ENCODE measurements at regions of chr4 and their contacts with region 1.

Region 1: DNA sequence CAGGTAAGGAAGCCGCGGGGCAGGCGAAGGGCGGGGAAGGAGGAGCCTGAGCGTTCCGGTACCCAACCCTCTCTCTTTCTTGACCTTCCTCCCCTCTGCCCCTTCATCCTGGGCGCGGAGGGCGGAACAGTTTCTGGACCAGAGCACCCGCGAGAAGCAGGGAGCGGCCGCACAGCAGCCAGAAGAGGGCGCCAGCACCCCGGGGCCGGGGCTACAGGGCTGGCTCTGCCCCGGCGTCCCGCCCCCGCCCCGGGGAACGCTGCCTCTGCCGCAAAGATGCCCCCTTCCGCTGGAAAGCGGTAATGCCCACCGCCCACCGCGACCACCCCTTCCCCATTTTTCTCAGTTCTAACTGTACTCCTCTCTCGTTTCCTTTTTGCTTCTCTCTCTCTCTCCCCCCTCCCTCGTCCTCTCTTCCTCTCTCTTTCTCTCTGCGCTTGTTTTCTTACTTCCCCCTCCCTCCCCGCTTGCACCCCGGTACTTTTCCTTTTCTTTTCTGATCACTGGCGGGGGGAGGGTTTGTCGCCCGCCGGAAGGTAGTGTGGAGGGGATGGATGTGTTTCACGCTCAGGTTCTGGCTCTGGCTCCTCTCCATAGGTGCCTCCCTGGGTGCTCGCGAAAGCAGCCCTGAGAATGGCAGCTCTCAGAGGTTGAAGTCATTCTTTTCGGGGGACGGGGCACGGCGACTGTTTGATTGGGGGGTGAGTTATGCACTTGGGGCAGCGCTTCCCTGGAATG is 13.1 kb upstream of the PRDM8 start:
- DNase-seq: peak; percentile 94
- ATAC-seq: peak; percentile 79
- H3K4me3 ChIP-seq: peak overlapping the region; percentile 64 to 99 (median 91)
- H3K4me3 Mint-ChIP-seq: peak overlapping the region; percentile 99
- H3K27ac ChIP-seq: peak overlapping the region; percentile 80 to 82
- H3K27ac Mint-ChIP-seq: peak overlapping the region; percentile 98
- H3K4me1 ChIP-seq: peaks cover 39 to 42% of the 10 kb centered on the region in 2 donors
- H3K4me1 Mint-ChIP-seq: peaks cover 56% of the 10 kb centered on the region
- H3K27me3 ChIP-seq: peaks cover 0 to 26% (median 0%) of the 10 kb centered on the region in 4 experiments
- H3K27me3 Mint-ChIP-seq: peaks cover 3% of the 10 kb centered on the region
- CTCF ChIP-seq: peak; percentile 100

Region 2: DNA sequence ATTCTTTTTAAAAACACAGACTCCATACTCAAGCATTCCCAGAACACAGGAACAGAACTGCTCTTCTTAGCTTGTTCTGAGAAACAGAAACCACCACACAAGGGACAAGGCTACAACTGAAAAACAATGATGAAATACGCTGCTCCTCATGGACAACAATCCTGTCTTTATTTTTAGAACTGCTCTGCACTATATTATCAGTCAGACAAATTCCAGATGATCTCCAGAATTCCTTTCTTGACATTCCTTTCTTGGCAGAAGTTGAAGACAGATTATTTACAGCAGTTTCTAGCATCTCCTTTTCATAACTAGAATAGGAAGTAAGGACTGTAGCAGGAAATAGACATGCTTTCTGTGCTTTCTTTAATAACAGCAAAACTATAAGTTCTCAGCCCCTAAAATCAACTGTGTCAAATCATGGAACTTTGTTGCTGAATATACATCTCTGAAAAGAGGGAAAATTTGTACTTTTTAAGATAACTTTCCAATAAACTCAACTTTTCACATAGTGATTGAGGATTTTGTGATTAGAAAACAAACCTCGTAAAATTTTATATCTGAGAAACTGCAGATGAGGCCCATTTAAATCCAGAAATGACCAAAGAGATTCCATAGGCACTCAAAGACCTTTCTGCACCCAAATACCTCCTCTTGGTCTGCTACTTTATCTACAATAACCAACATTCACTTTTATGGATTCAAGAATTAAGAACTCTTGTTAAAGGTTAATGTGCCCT is 147.1 kb before region 1 on chr4:
- CTCF ChIA-PET with region 1: no interaction called
- POLR2A ChIA-PET with region 1: no interaction called
- intact Hi-C with region 1: no loop called
- DNase-seq: no peak
- ATAC-seq: no peak
- H3K4me3 ChIP-seq: no peak overlapping the region
- H3K4me3 Mint-ChIP-seq: peak overlapping the region; percentile 14
- H3K27ac ChIP-seq: peak overlapping the region in 1 of 2 donors; percentile 54
- H3K27ac Mint-ChIP-seq: peak overlapping the region; percentile 37
- H3K4me1 ChIP-seq: peaks cover 0 to 16% of the 10 kb centered on the region in 2 donors
- H3K4me1 Mint-ChIP-seq: peaks cover 22% of the 10 kb centered on the region
- H3K27me3 ChIP-seq: no peaks in the 10 kb centered on the region
- H3K27me3 Mint-ChIP-seq: no peaks in the 10 kb centered on the region
- CTCF ChIP-seq: no peak

Region 3: DNA sequence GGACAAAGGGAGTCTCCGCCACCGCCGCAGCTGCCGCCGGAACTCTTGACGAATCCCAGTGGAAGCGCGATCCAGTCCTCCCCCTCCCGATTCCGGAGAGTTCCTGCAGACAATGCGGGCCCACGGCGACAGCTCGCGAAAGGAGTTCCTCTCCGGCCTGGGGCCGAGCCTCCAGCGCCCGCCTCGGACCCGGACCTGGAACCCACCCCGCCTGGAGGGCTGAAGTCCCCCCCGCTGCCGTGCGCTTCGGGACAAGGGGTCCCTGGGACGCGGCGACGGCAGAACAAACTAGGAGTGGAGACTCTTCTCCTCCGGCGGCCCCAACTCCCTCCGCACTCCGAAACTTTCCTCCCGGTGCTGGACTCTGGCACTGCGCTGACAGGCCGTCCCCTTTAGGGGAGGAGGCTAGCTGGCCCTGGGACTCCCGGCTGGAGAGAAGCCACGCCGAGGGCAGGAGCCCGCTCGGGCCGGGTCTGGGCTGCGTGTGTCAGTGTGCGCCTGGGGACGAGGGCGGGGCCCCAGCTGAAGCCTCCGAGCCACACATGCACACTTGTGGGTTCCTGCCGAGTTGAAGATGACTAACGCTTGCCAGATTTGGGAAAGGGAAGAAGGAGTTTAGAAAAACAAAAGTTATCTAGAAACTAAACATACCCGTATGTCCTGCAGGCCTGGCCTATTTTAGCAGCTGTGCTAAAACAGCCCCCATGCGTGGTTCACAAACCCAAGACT is 111.3 kb before region 1 on chr4 and contains the start of gene ANTXR2:
- CTCF ChIA-PET with region 1: interaction called, 50 read pairs
- POLR2A ChIA-PET with region 1: interaction called, 20 read pairs
- intact Hi-C with region 1: loop called (anchors 1 kb)
- DNase-seq: peak; percentile 88
- ATAC-seq: peak; percentile 73
- H3K4me3 ChIP-seq: peak within 1 kb of the TSS; percentile 87 to 96 (median 88)
- H3K4me3 Mint-ChIP-seq: peak within 1 kb of the TSS; percentile 99
- H3K27ac ChIP-seq: peak within 1 kb of the TSS; percentile 91 to 97
- H3K27ac Mint-ChIP-seq: peak within 1 kb of the TSS; percentile 99
- H3K4me1 ChIP-seq: peaks cover 27% of the 10 kb centered on the region in 2 donors
- H3K4me1 Mint-ChIP-seq: peaks cover 52% of the 10 kb centered on the region
- H3K27me3 ChIP-seq: no peaks in the 10 kb centered on the region
- H3K27me3 Mint-ChIP-seq: no peaks in the 10 kb centered on the region
- CTCF ChIP-seq: no peak
- total RNA-seq, gene ANTXR2: 63.0 and 68.8 TPM in 2 replicates

Region 4: GRCh38 chr4:80173401-80173800 is 10.8 kb before region 1 on chr4:
- CTCF ChIA-PET with region 1: interaction called, 96 read pairs
- POLR2A ChIA-PET with region 1: interaction called, 32 read pairs
- intact Hi-C with region 1: loop called (anchors 1 kb)
- DNase-seq: peak; percentile 82
- ATAC-seq: peak; percentile 93
- H3K4me3 ChIP-seq: peak overlapping the region in 1 of 5 experiments; percentile 47
- H3K4me3 Mint-ChIP-seq: peak overlapping the region; percentile 87
- H3K27ac ChIP-seq: peak overlapping the region; percentile 80 to 84
- H3K27ac Mint-ChIP-seq: peak overlapping the region; percentile 98
- H3K4me1 ChIP-seq: peaks cover 41 to 42% of the 10 kb centered on the region in 2 donors
- H3K4me1 Mint-ChIP-seq: peaks cover 60% of the 10 kb centered on the region
- H3K27me3 ChIP-seq: no peaks in the 10 kb centered on the region
- H3K27me3 Mint-ChIP-seq: no peaks in the 10 kb centered on the region
- CTCF ChIP-seq: no peak

Region 5: GRCh38 chr4:80202190-80202711 is 18.0 kb after region 1 on chr4:
- CTCF ChIA-PET with region 1: interaction called, 195 read pairs
- POLR2A ChIA-PET with region 1: interaction called, 19 read pairs
- intact Hi-C with region 1: loop called (anchors 1 kb)
- DNase-seq: peak; percentile 90
- ATAC-seq: peak; percentile 60
- H3K4me3 ChIP-seq: peak overlapping the region; percentile 41 to 82 (median 77)
- H3K4me3 Mint-ChIP-seq: peak overlapping the region; percentile 89
- H3K27ac ChIP-seq: peak overlapping the region; percentile 53 to 82
- H3K27ac Mint-ChIP-seq: peak overlapping the region; percentile 91
- H3K4me1 ChIP-seq: peaks cover 17 to 24% of the 10 kb centered on the region in 2 donors
- H3K4me1 Mint-ChIP-seq: peaks cover 24% of the 10 kb centered on the region
- H3K27me3 ChIP-seq: peaks cover 0 to 21% (median under 1%) of the 10 kb centered on the region in 4 experiments
- H3K27me3 Mint-ChIP-seq: peaks cover 8% of the 10 kb centered on the region
- CTCF ChIP-seq: peak; percentile 86

Region 6: DNA sequence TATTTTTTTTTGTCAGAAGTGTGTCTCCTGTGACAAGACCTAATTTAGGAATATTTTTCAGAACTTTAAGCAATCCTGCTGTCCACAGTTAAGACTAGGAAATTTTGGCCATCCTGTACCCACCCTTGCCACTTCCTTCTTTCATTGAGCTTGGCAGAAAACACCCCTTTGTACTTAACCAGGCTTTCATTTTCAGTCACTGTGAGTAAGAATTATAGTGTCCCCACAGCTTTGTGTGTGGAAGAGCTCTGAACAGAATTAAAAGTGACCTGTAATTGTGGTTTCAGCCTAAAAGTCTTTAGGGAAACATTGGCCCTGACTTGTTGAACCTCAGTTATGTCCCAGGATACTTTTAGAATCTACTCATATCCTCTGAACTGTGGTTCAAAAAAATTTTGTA is 692.6 kb after region 1 on chr4:
- CTCF ChIA-PET with region 1: no interaction called
- POLR2A ChIA-PET with region 1: no interaction called
- intact Hi-C with region 1: loop called (anchors 10 kb)
- DNase-seq: peak; percentile 34
- ATAC-seq: peak; percentile 34
- H3K4me3 ChIP-seq: peak overlapping the region in 1 of 5 experiments; percentile 21
- H3K4me3 Mint-ChIP-seq: peak overlapping the region; percentile 10
- H3K27ac ChIP-seq: peak overlapping the region; percentile 50 to 72
- H3K27ac Mint-ChIP-seq: peak overlapping the region; percentile 62
- H3K4me1 ChIP-seq: peaks cover 24 to 26% of the 10 kb centered on the region in 2 donors
- H3K4me1 Mint-ChIP-seq: peaks cover 31% of the 10 kb centered on the region
- H3K27me3 ChIP-seq: no peaks in the 10 kb centered on the region
- H3K27me3 Mint-ChIP-seq: no peaks in the 10 kb centered on the region
- CTCF ChIP-seq: no peak

Measured in B cell (primary cell).